Activated CD8-positive, alpha-beta T cell treated with anti-CD3 and anti-CD28 coated beads for 36 hours (primary cell): ENCODE measurements at regions of chr21 and their contacts with region 1.

Region 1: DNA sequence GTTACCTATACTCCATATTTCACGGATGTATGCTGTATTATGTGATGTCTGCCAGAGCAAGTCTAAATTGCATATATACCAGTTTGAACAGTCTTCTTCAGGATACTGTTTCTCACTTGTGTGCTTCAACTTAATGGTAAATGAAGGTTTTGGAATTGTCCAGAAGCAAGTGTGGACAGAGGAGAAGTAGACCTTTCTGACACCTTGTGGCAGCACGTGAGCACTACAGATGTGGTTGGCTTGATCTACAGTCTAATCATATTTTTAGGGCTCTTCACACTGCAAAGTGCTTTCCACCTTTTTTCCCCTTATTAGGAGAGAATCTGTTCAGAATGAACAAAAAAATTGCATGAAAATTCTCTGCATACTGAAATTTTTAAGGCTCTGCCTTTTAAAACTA is 10.9 kb downstream of the MORC3 start:
- DNase-seq: peak; percentile 65
- ATAC-seq: peak; percentile 90
- H3K4me3 Mint-ChIP-seq: no peak overlapping the region
- H3K27ac Mint-ChIP-seq: peak overlapping the region; percentile 26
- H3K4me1 Mint-ChIP-seq: peaks cover 39% of the 10 kb centered on the region
- H3K27me3 Mint-ChIP-seq: no peaks in the 10 kb centered on the region
- CTCF ChIP-seq: peak; percentile 69

Region 2: DNA sequence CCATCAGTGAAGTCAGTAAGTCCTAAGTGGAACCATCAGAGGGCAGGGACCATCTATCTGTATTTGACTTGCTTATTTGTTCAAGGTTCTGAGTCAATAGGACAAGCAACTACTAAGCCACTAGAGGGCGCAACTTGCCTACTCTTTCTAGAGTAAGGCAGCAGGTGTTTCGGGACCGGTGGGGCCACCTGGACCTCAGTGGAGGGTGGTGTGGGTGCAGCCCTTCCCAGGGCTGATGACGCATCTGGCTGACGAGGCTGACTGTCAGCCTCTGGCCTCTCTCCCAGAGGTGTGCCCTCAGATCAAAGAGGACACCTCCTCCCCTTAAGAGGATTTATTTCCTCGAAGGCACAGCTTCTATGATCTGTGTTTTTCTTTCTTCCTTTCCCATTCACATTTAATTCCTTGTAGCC is 189.4 kb before region 1 on chr21:
- CTCF ChIA-PET with region 1: interaction called, 26 read pairs
- POLR2A ChIA-PET with region 1: no interaction called
- intact Hi-C with region 1: loop called (anchors 5 kb)
- DNase-seq: peak; percentile 94
- ATAC-seq: peak; percentile 96
- H3K4me3 Mint-ChIP-seq: no peak overlapping the region
- H3K27ac Mint-ChIP-seq: no peak overlapping the region
- H3K4me1 Mint-ChIP-seq: peaks cover 15% of the 10 kb centered on the region
- H3K27me3 Mint-ChIP-seq: no peaks in the 10 kb centered on the region
- CTCF ChIP-seq: peak; percentile 95

Region 3: GRCh38 chr21:36385233-36386030 is 54.5 kb after region 1 on chr21 and contains the start of gene CHAF1B:
- CTCF ChIA-PET with region 1: no interaction called
- POLR2A ChIA-PET with region 1: no interaction called
- intact Hi-C with region 1: no loop called
- DNase-seq: peak; percentile 88
- ATAC-seq: peak; percentile 98
- H3K4me3 Mint-ChIP-seq: peak within 1 kb of the TSS; percentile 84
- H3K27ac Mint-ChIP-seq: peak within 1 kb of the TSS; percentile 77
- H3K4me1 Mint-ChIP-seq: peaks cover 18% of the 10 kb centered on the region
- H3K27me3 Mint-ChIP-seq: no peaks in the 10 kb centered on the region
- CTCF ChIP-seq: no peak
- total RNA-seq, gene CHAF1B: 30.9 to 34.7 TPM